Right cardiac atrium (tissue), 5 donors: ENCODE measurements at regions of chr13 and their contacts with region 1.

Region 1: DNA sequence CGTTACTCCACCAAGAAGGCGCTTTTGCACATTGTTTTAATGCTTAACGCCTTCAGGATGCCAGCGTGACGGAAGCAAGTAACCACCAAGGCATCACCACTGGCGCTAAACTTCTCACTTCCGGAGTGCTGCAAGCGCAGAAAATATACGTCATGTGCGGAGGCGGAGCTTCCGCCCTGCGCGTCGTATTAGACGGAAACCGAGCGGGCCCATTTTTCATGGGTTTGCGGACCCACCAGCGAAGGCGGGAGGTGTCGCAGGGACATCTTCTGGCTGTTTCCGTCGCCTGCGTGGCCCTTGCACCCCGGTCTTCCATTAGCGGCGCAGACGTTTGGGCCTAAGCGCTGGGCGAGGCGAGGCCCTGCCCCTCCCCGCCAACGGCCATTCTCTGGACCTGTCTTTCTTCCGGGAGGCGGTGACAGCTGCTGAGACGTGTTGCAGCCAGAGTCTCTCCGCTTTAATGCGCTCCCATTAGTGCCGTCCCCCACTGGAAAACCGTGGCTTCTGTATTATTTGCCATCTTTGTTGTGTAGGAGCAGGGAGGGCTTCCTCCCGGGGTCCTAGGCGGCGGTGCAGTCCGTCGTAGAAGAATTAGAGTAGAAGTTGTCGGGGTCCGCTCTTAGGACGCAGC is at the start of gene ERCC5:
- DNase-seq: peak; percentile 96 to 97 (median 97)
- ATAC-seq: peak; percentile 95 to 96
- H3K4me3 ChIP-seq: peak within 1 kb of the TSS; percentile 96
- H3K27ac ChIP-seq: peak within 1 kb of the TSS; percentile 100
- H3K4me1 ChIP-seq: peaks cover 2% of the 10 kb centered on the region
- H3K27me3 ChIP-seq: no peaks in the 10 kb centered on the region
- total RNA-seq, gene ERCC5: 28.6 to 34.4 (median 30.6) TPM

Region 2: GRCh38 chr13:102538938-102539337 is 306.8 kb before region 1 on chr13:
- intact Hi-C with region 1: no loop called
- DNase-seq: no peak
- ATAC-seq: no peak
- H3K4me3 ChIP-seq: no peak overlapping the region
- H3K27ac ChIP-seq: no peak overlapping the region
- H3K4me1 ChIP-seq: no peaks in the 10 kb centered on the region
- H3K27me3 ChIP-seq: no peaks in the 10 kb centered on the region

Region 3: DNA sequence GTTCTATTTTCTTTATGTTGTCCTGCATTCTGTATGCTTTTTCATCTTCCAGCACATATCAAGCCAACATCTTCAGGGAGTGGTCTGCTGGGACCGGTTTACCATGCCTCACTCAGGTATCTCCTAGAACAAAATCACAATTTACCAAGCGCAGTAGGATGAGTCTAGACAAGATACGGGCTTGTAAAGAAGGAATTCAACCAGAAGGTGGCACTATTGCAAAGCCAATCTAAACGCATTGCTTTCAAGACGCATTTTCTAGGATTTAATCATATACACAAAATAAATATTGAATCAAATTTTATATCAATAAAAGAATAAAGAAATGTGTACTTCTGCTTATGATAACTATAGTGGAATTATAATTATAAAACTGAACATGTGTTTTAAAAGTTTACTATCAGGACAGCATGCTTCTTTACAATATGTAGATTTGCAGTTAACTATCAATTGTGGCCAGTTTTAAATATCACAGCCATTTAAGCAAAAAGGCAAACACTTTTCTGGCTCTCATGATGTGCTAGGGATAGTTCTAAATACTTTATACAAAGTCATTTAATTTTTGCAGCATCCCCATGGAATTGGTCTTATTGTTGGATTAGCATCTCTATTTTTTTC is 265.1 kb before region 1 on chr13:
- intact Hi-C with region 1: loop called (anchors 5 kb)
- DNase-seq: no peak
- ATAC-seq: peak; percentile 56 to 61
- H3K4me3 ChIP-seq: no peak overlapping the region
- H3K27ac ChIP-seq: no peak overlapping the region
- H3K4me1 ChIP-seq: no peaks in the 10 kb centered on the region
- H3K27me3 ChIP-seq: no peaks in the 10 kb centered on the region

Region 4: DNA sequence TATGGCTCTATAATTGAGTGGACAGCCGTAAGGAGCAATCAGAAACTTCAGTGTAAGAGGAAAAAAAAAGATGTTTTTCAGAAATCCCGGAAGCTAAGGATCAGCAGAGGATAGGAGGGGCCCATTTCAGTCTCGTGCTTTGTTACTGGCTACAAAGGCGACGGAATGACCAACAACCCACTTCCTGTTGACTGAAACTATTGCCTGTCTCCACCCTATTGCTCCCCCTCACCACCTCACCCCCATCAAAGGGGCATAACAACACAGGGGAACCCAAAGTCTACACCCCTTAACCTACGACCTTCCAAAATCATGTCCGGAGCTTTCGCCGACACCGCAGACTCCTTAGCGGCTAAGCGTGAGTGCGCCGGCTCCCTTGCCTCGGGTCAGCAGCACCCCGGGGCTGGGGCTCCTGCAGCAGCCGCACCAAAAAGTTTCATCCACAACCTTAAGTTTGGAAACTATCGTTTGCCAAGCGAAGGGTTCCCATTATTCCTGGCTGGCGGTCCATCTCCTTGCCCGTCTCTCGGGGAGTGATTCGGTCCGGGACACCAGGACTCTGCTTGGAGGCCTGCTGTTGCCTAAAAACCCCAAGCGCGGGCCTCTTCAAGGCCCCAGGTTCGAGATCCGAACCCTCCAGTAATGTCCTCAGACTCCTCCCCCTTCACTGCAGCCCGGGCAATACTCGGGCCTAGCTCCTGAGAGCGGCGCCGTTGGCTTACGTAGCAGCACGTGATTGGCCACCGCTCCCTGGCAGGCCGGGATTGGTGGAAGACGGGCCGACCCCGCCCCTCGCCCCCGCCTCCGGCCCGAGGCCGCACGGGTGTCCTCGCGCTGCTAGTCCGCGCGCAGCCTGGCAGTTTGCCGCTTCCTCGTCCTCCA is 249.4 kb before region 1 on chr13 and contains the start of gene TPP2:
- intact Hi-C with region 1: loop called in 2 of 4 experiments (anchors 5 kb)
- DNase-seq: peak; percentile 100
- ATAC-seq: peak; percentile 99
- H3K4me3 ChIP-seq: peak within 1 kb of the TSS; percentile 96
- H3K27ac ChIP-seq: peak within 1 kb of the TSS; percentile 100
- H3K4me1 ChIP-seq: peaks cover 6% of the 10 kb centered on the region
- H3K27me3 ChIP-seq: no peaks in the 10 kb centered on the region
- total RNA-seq, gene TPP2: 29.2 to 35.1 (median 32.7) TPM

Region 5: DNA sequence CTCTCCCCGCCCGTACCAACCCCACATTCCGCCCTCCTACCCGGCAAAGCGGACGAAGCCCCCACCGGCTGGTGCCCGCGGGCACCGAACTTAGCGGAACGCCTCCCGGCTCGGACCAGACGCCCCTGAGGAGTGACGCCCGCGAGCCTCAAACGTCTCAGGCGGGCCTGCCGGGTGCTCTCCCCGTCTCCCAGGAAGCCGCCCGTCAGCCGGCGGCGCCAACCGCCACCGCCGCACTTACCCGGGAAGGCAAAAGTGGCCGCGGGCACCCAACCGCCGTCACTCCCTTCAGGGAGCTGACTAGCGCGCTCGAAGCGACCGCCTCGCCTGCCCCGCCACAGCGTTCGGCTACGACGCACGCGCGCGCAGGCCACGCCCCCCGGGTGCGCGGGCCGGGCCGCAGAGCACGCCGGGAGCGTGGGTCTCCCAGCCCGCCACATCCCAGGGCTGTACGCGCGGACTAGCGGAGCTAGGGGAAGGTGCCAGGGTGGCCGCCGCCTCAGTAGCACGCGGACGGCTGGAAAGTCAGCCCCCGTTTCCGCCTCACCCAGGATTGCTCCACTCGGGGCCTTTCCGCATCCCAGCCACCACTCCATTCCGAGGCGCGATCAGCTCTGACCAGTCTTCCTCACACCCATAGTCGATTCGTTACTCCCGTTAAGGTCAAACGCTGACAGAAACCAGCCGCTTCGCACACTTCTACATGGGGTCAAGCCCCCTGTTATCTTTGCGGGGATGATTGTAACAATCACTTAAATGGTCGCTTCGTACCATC is 72.1 kb before region 1 on chr13 and contains the start of gene TEX30:
- intact Hi-C with region 1: loop called in 1 of 4 experiments (anchors 10 kb)
- DNase-seq: peak; percentile 89 to 95 (median 94)
- ATAC-seq: peak; percentile 100
- H3K4me3 ChIP-seq: peak within 1 kb of the TSS; percentile 78
- H3K27ac ChIP-seq: peak within 1 kb of the TSS; percentile 67
- H3K4me1 ChIP-seq: peaks cover 3% of the 10 kb centered on the region
- H3K27me3 ChIP-seq: no peaks in the 10 kb centered on the region
- total RNA-seq, gene TEX30: 7.4 to 10.0 (median 9.4) TPM

Region 6: GRCh38 chr13:103031332-103031873 is 185.7 kb after region 1 on chr13:
- intact Hi-C with region 1: no loop called
- DNase-seq: no peak
- ATAC-seq: no peak
- H3K4me3 ChIP-seq: no peak overlapping the region
- H3K27ac ChIP-seq: no peak overlapping the region
- H3K4me1 ChIP-seq: no peaks in the 10 kb centered on the region
- H3K27me3 ChIP-seq: no peaks in the 10 kb centered on the region

Region 7: DNA sequence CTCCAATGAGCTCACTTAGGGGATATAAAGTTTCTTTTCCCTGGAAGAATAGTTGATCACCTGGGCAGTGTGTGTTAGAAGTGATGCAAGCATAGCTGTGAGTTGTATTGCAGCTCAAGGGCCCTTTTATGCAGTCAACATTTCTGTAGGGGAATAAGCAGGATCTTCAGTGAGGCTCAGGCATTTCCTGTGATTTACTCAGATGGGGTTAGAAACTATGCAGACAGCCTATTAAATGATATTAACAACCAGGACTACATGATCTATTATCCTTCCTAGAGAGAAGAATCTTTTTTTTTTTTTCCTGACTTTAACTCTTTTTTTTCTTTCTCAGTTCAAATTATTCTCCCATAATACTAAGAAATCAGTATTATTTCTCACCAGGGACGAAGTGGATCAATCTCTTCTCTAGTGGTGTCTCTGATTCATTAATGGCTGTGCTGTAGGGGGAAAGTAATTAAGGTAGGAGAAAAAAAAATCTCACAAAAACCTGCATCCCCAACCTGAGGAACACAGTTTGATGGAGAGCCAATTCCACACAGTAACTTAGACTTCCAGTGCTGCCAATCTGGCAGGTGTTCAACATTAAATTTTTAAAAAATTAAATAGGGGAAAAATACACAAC is 346.9 kb after region 1 on chr13:
- intact Hi-C with region 1: no loop called
- DNase-seq: no peak
- ATAC-seq: no peak
- H3K4me3 ChIP-seq: no peak overlapping the region
- H3K27ac ChIP-seq: no peak overlapping the region
- H3K4me1 ChIP-seq: peaks cover 1% of the 10 kb centered on the region
- H3K27me3 ChIP-seq: no peaks in the 10 kb centered on the region